OCI-LY7 (cell line): ENCODE measurements at regions of chr9 and their contacts with region 1.

Region 1: DNA sequence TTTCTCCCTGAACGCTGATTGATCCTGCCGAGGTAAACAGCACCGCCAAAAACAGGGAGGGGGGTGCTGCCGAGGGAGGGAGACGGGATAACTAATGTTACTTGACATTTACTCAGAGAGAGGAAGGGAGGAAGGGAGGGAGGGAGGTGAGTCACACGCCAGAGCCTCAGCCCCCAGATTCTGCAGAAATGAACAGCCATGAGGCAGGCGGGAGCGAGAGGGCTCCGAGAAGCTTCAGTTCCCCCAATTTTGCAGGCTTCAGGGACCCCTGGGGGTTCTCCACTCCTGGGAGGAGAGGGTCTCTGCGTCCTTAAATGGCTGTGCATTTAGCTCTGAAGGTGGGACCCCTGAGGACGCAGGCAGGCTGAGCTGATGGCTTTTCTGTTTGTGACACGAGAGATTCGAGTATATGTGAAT is 59.1 kb upstream of the IER5L start:
- DNase-seq: peak; percentile 41
- H3K4me3 ChIP-seq: peak overlapping the region; percentile 56
- H3K27ac ChIP-seq: peak overlapping the region; percentile 66
- H3K4me1 ChIP-seq: peaks cover 35% of the 10 kb centered on the region
- CTCF ChIP-seq: no peak

Region 2: DNA sequence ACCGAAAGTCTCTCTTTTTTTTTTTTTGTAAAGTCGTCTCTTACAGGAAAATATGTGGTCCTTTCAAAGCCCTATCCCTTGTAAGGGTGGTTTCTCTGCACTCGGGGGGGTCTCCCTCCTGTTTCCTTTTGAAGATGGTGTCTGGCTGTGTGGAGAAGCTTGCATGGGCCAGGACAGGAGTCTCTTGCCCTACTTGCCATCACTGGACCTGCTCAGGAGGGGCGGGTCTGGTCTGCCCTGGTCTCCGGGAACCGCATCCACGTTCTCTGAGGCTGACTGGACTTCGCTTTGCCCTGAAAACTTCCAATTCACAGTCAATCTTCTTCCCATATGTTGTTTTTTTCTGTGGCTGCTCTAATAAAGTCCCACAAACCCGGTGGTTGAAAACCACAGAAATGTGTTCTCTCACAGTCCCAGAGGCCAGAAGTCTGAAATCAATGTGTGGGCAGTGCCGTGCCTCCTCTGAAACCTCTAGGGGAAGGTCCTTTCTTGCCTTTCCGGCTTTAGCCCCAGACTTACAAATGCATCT is 33.8 kb after region 1 on chr9:
- CTCF ChIA-PET with region 1: no interaction called
- POLR2A ChIA-PET with region 1: interaction called, 5 read pairs
- intact Hi-C with region 1: loop called (anchors 1 kb)
- DNase-seq: peak; percentile 57
- H3K4me3 ChIP-seq: peak overlapping the region; percentile 49
- H3K27ac ChIP-seq: peak overlapping the region; percentile 87
- H3K4me1 ChIP-seq: peaks cover 56% of the 10 kb centered on the region
- CTCF ChIP-seq: no peak